B cell (primary cell): ENCODE measurements at regions of chr7 and their contacts with region 1.

Region 1: DNA sequence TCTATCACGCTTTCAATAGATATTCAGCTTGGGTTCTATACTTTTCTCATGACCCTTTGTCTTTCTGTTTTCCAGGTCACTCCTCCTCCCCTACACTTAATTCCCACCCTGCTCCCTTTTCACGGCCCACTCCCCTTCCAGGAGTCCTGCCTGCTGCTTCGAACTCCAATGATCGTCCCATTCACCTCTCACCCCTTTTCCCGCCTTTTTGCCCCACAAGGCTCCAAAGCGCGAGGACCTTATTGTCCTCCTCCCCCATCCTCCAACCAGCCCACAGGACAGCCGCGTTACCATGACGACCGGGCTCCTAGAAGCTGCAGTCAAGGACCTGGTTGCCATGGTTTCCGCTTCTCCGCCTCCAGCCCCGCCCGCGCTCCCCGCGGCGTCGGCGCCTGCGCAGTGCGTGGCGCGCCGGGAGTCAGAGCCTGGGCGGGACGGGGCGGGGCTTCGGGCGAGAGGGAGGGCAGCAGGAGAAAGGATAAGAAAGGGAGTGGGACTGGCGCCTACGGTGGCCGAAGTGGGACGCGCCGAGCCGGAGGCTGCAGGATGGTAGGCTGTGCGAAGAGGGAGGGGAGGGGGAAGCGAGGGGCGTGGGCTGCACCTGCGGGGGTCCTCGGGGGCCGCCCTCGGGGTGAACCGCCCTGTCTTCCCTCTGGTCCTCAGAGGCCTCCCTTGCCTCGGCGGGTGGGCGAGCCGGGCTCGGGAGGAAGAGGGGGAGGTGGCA is at the start of gene AP1S1:
- DNase-seq: peak; percentile 95
- ATAC-seq: peak; percentile 90
- H3K4me3 ChIP-seq: peak within 1 kb of the TSS in 4 of 5 experiments; percentile 53 to 71 (median 63)
- H3K4me3 Mint-ChIP-seq: peak within 1 kb of the TSS; percentile 86
- H3K27ac ChIP-seq: no peak within 1 kb of the TSS
- H3K27ac Mint-ChIP-seq: peak within 1 kb of the TSS; percentile 67
- H3K4me1 ChIP-seq: peaks cover 10 to 16% of the 10 kb centered on the region in 2 donors
- H3K4me1 Mint-ChIP-seq: peaks cover 12% of the 10 kb centered on the region
- H3K27me3 ChIP-seq: no peaks in the 10 kb centered on the region
- H3K27me3 Mint-ChIP-seq: peaks cover 9% of the 10 kb centered on the region
- CTCF ChIP-seq: no peak
- total RNA-seq, gene AP1S1: 10.3 and 11.4 TPM in 2 replicates

Region 2: DNA sequence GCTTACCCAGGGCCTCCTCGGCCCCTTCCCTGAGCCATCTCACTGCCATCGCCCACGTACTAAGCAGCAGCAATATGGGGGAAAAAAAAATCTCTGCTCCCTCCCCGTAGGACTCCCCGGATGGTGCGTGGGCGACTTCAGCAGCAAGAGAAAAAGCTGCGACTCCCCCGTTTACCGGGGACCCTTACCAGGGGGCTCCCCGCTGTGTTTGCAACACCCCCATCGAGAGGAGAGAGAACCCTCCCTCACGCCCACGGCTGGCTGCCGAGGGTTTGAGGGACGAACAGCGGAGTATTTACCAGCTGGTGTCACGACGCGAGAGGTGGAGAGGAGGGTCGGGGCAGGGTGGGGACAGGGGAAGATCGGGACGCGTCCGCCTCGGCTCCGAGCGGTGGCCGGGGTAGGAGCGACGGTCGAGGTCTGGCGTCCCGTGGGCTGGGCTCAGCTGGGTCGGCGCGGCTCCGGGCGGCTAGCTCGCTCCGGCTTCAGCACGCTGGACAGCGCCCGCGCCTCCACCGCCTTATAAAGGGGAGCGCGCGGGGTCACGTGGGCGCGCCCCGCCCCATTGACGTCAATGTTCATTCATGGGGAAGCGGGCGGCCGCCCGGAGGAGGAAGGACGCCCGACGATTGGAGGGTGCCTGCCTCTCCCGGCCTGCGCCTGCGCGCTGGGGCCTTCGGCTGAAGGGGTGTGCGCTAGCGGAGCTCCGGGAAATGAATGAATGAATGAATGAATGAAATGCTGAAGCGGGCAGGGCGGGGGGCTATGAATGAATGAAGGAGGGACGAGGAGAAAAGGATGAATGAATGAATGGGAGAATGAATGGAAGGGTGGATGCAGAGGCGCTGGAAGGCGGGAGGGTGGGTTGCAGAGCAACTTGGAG is 11.2 kb after region 1 on chr7 and contains the start of gene VGF:
- CTCF ChIA-PET with region 1: interaction called, 5 read pairs
- POLR2A ChIA-PET with region 1: interaction called, 5 read pairs
- intact Hi-C with region 1: loop called (anchors 1 kb)
- DNase-seq: peak; percentile 95
- ATAC-seq: peak; percentile 83
- H3K4me3 ChIP-seq: peak within 1 kb of the TSS in 3 of 5 experiments; percentile 0 to 58 (median 17)
- H3K4me3 Mint-ChIP-seq: peak within 1 kb of the TSS; percentile 82
- H3K27ac ChIP-seq: no peak within 1 kb of the TSS
- H3K27ac Mint-ChIP-seq: peak within 1 kb of the TSS; percentile 81
- H3K4me1 ChIP-seq: peaks cover 56 to 67% of the 10 kb centered on the region in 2 donors
- H3K4me1 Mint-ChIP-seq: peaks cover 42% of the 10 kb centered on the region
- H3K27me3 ChIP-seq: peaks cover 0 to 79% (median 55%) of the 10 kb centered on the region in 4 experiments
- H3K27me3 Mint-ChIP-seq: peaks cover 51% of the 10 kb centered on the region
- CTCF ChIP-seq: no peak
- total RNA-seq, gene VGF: 0.12 and 0.17 TPM in 2 replicates

Region 3: DNA sequence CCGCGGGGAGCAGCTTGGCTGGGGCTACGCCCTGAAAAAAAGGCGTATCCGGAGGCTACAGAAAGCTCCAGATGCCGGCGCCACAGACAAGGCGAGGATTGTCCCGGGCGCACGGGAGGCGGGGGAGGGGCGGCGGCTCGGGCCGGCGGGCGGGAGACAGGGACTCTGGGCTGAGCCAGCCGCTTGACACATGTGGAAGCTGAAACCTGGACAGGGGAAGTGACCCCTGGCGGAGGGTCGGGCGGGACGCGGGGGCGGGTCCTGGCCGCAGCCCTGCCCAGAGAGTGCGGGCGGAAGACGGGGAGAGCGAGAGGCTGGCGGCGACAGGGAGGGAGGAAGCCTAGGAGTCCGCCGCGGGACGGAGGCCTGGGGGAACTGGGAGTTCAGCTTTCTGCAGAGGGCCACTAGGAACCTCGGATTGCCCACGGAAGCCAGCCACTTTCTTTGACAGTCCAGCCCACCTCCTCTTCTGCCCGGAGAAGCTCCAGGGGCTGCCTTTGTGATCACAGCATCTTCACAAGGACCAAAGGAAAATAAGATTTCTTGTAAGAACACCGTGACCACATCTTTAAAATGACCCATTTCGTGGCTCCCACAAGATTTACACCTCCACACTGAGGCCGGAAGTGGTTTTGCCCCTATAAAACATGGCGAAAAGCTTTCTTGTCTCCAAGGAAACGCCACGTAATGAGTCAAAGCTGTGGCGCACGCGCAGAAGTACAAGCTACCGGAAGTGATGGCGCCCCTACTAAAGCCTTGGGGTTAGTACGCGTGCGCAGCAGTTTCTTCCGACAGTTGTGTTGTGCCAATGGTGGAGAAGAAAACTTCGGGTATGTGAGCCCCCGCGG is 63.5 kb after region 1 on chr7 and contains the starts of genes PLOD3 and ZNHIT1:
- CTCF ChIA-PET with region 1: interaction called, 3 read pairs
- POLR2A ChIA-PET with region 1: no interaction called
- intact Hi-C with region 1: loop called (anchors 1 kb)
- DNase-seq: peak; percentile 98
- ATAC-seq: peak; percentile 80
- H3K4me3 ChIP-seq: peak within 1 kb of the TSS; percentile 85 to 99 (median 94)
- H3K4me3 Mint-ChIP-seq: peak within 1 kb of the TSS; percentile 97
- H3K27ac ChIP-seq: peak within 1 kb of the TSS; percentile 44 to 75
- H3K27ac Mint-ChIP-seq: peak within 1 kb of the TSS; percentile 95
- H3K4me1 ChIP-seq: peaks cover 18 to 21% of the 10 kb centered on the region in 2 donors
- H3K4me1 Mint-ChIP-seq: peaks cover 25% of the 10 kb centered on the region
- H3K27me3 ChIP-seq: no peaks in the 10 kb centered on the region
- H3K27me3 Mint-ChIP-seq: no peaks in the 10 kb centered on the region
- CTCF ChIP-seq: peak; percentile 6
- total RNA-seq, gene PLOD3: 47.5 and 47.9 TPM in 2 replicates
- total RNA-seq, gene ZNHIT1: 37.3 and 38.4 TPM in 2 replicates